Natural killer cell (primary cell): ENCODE measurements at regions of chr6 and their contacts with region 1.

Region 1: DNA sequence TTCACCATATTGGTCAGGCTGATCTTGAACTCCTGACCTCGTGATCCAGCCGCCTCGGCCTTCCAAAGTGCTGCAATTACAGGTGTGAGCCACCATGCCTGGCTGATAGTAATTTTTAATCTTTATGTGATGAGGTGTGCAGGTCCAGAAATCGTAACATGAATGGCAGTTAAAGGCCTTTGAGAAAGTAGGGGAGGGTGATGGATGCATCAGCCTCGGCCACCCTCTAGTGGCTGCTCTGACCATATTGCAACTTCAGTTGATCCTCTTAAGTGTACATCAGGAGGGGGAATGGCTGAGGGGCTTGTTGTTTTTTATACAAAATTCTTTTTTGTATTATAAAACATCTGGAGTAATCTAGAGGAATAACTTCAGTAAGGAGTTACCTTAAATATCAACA is 193.0 kb downstream of the ZFAND3 start:
- DNase-seq: peak; percentile 19 to 53
- ATAC-seq: peak in 2 of 3 donors; percentile 80 to 85
- H3K4me3 ChIP-seq: no peak overlapping the region
- H3K4me3 Mint-ChIP-seq: no peak overlapping the region
- H3K27ac ChIP-seq: no peak overlapping the region
- H3K27ac Mint-ChIP-seq: no peak overlapping the region
- H3K4me1 ChIP-seq: no peaks in the 10 kb centered on the region
- H3K4me1 Mint-ChIP-seq: peaks cover 38 to 50% of the 10 kb centered on the region in 2 donors
- H3K27me3 ChIP-seq: no peaks in the 10 kb centered on the region
- H3K27me3 Mint-ChIP-seq: no peaks in the 10 kb centered on the region
- CTCF ChIP-seq: peak; percentile 67

Region 2: GRCh38 chr6:37705239-37706051 is 307.1 kb before region 1 on chr6:
- intact Hi-C with region 1: loop called (anchors 1 kb)
- DNase-seq: peak; percentile 55 to 88
- ATAC-seq: peak; percentile 74 to 95 (median 91)
- H3K4me3 ChIP-seq: peak overlapping the region; percentile 25
- H3K4me3 Mint-ChIP-seq: peak overlapping the region; percentile 82
- H3K27ac ChIP-seq: no peak overlapping the region
- H3K27ac Mint-ChIP-seq: peak overlapping the region; percentile 58 to 83
- H3K4me1 ChIP-seq: peaks cover 15% of the 10 kb centered on the region
- H3K4me1 Mint-ChIP-seq: peaks cover 15 to 17% of the 10 kb centered on the region in 2 donors
- H3K27me3 ChIP-seq: no peaks in the 10 kb centered on the region
- H3K27me3 Mint-ChIP-seq: peaks cover 10 to 26% of the 10 kb centered on the region in 2 donors
- CTCF ChIP-seq: peak; percentile 68

Region 3: DNA sequence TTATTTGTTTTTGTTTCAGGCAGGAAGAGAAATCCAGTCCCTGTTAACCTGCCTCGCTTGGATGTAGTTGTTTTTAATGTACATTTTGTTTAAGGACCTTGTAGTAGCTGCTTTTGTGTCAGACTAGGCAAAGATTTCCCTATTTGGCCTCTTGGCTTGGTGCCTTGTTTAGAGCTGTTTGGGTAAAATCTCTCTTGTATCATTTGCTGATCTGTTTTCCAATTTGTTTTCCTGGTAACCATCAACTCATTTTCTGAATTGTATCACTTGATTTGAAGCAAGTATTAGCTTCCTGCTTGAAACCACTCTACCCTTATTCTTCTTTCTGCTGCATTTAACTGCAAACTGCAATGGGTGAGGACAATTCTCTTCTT is 32.4 kb before region 1 on chr6:
- intact Hi-C with region 1: no loop called
- DNase-seq: no peak
- ATAC-seq: no peak
- H3K4me3 ChIP-seq: no peak overlapping the region
- H3K4me3 Mint-ChIP-seq: no peak overlapping the region
- H3K27ac ChIP-seq: no peak overlapping the region
- H3K27ac Mint-ChIP-seq: peak overlapping the region; percentile 21 to 53
- H3K4me1 ChIP-seq: peaks cover 3% of the 10 kb centered on the region
- H3K4me1 Mint-ChIP-seq: peaks cover 60 to 66% of the 10 kb centered on the region in 2 donors
- H3K27me3 ChIP-seq: no peaks in the 10 kb centered on the region
- H3K27me3 Mint-ChIP-seq: no peaks in the 10 kb centered on the region
- CTCF ChIP-seq: no peak

Region 4: GRCh38 chr6:37994238-37994637 is 18.3 kb before region 1 on chr6:
- intact Hi-C with region 1: no loop called
- DNase-seq: no peak
- ATAC-seq: no peak
- H3K4me3 ChIP-seq: no peak overlapping the region
- H3K4me3 Mint-ChIP-seq: no peak overlapping the region
- H3K27ac ChIP-seq: no peak overlapping the region
- H3K27ac Mint-ChIP-seq: no peak overlapping the region
- H3K4me1 ChIP-seq: no peaks in the 10 kb centered on the region
- H3K4me1 Mint-ChIP-seq: peaks cover 60 to 63% of the 10 kb centered on the region in 2 donors
- H3K27me3 ChIP-seq: no peaks in the 10 kb centered on the region
- H3K27me3 Mint-ChIP-seq: no peaks in the 10 kb centered on the region
- CTCF ChIP-seq: no peak

Region 5: DNA sequence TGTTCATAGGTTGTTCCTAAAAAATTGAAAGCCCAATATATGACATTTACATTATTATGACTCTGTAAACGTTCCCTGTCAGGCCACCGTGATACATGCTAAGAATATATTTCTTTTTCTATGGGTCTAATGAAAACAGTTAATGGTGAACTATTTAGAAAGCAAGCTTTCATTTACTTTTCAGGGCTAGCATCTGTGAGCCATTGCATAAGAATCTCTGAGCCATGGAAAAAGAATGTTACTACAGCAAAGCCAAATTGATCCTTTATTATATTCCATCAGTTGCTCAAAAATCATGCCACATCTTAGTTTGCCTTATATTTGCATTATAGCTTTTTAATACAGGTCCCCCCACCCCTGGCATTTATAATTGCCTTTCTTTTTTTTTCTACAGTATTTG is 82.5 kb after region 1 on chr6:
- intact Hi-C with region 1: no loop called
- DNase-seq: no peak
- ATAC-seq: no peak
- H3K4me3 ChIP-seq: no peak overlapping the region
- H3K4me3 Mint-ChIP-seq: no peak overlapping the region
- H3K27ac ChIP-seq: no peak overlapping the region
- H3K27ac Mint-ChIP-seq: no peak overlapping the region
- H3K4me1 ChIP-seq: no peaks in the 10 kb centered on the region
- H3K4me1 Mint-ChIP-seq: peaks cover 14 to 20% of the 10 kb centered on the region in 2 donors
- H3K27me3 ChIP-seq: no peaks in the 10 kb centered on the region
- H3K27me3 Mint-ChIP-seq: no peaks in the 10 kb centered on the region
- CTCF ChIP-seq: no peak